ENCODE measurements at regions of chr6 and their contacts with region 1.

Region 1: GRCh38 chr6:127069659-127070279 is 48.7 kb upstream of the RSPO3 start:
- DNase-seq: peak; percentile 55
- H3K4me3 ChIP-seq: no peak overlapping the region
- H3K27ac ChIP-seq: no peak overlapping the region
- H3K4me1 ChIP-seq: no peaks in the 10 kb centered on the region
- H3K27me3 ChIP-seq: no peaks in the 10 kb centered on the region
- CTCF ChIP-seq: peak; percentile 34 to 40
- POLR2A ChIP-seq: no peak

Region 2: DNA sequence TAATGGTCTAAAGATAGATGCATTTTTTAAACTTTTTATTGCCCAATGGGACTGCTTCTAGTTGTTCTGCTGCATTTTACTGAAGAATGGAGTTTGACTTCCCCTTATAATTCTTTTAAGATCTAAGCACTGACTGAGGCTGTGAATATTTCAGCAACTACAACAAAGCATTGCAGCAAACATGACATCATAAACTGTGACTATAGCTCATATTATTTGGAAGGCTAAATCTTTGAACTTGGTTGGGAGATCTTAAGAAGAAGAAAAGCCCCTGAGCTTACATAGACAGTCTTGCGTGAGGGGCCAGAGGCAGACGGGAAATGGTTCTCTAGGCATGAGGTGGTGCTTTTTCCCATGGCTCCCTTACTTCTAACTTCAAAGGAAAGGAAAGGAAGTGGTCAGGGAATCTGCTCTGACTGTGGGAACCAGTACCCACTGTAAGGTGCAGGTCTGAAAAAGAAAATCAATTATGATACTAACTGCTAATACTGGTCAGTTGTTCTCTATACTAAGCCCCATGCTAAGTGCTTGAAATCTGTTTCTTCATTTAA is 1305.6 kb before region 1 on chr6:
- CTCF ChIA-PET with region 1: no interaction called
- POLR2A ChIA-PET with region 1: no interaction called
- dilution Hi-C with region 1: no loop called
- intact Hi-C with region 1: no loop called
- DNase-seq: no peak
- H3K4me3 ChIP-seq: no peak overlapping the region
- H3K27ac ChIP-seq: no peak overlapping the region
- H3K4me1 ChIP-seq: no peaks in the 10 kb centered on the region
- H3K27me3 ChIP-seq: peaks cover 0 to 20% of the 10 kb centered on the region in 2 experiments
- CTCF ChIP-seq: no peak
- POLR2A ChIP-seq: no peak

Region 3: DNA sequence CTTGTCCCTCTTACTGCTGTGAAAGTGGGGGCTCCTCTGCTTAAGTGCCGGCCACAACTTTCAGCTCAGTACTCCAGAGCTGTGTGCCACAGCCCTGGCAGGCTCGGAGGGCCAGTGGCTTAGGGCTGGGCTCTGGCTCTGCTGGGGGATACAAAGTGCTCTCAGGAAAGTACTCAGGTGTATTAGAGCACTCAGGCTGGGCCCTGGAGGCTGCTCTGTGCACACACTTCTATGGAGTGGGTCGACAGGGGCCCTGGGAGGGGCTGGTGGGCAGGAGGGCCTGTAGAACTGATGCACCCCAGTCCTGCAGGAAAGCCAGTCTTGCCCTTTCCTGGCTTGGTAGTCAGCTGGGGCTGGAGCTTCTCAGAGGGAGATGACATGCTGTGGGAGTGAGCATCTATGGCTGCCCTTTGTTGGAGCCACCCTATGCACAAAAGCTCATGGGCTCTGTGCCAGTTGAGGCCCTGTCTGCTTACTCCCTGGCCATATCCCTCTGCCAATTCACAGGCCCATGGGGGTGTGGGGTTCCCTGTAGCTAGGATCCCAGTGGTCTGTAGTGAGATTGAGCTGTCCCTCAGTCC is 707.8 kb before region 1 on chr6:
- CTCF ChIA-PET with region 1: no interaction called
- POLR2A ChIA-PET with region 1: no interaction called
- dilution Hi-C with region 1: no loop called
- intact Hi-C with region 1: loop called (anchors 1 kb)
- DNase-seq: no peak
- H3K4me3 ChIP-seq: no peak overlapping the region
- H3K27ac ChIP-seq: no peak overlapping the region
- H3K4me1 ChIP-seq: peaks cover 5% of the 10 kb centered on the region
- H3K27me3 ChIP-seq: no peaks in the 10 kb centered on the region
- CTCF ChIP-seq: no peak
- POLR2A ChIP-seq: no peak